Mammary epithelial cell (primary cell): ENCODE measurements at regions of chr1 and their contacts with region 1.

Region 1: DNA sequence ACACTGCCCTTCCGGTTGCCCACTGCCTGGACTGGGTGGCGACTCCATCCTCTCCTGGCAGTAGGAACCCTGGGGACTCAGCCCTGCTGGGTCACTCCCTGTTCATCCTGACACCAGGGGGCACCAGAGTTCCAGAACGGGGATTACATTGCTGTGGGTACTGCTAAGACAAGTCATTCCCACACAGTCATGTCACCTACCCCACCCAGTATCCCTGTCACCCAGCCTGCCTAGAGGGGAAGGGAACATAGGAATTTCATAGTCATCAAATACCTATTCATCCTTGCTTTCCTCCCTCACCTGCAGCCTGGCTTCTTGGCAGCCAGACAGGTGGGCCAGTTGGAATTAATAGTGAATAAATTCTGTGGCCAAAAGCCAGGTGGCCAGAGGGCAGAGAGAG is 9.8 kb upstream of the SFN start:
- DNase-seq: peak; percentile 96
- H3K4me3 ChIP-seq: no peak overlapping the region
- H3K27ac ChIP-seq: peak overlapping the region; percentile 87
- H3K4me1 ChIP-seq: peaks cover 82% of the 10 kb centered on the region
- H3K27me3 ChIP-seq: no peaks in the 10 kb centered on the region
- CTCF ChIP-seq: peak; percentile 94 to 99

Region 2: DNA sequence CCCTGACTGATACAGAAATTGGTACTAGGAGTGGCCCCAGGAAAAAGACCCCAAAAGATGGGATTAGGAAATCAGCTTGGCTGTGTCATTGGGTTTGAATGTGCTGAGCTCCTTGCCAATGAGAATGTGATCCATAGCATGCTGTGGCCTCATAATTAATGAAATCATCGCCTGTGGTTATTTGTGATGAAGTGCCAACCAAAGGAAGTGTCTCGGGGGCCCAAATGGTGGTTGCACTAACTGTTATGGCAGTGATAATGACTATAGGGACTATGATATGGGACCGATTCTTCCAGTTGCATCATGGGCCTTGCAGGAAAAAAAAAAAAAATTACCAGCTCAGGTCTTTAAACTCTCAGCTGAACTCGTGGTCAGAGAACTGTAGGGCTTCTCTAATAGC is 42.1 kb before region 1 on chr1:
- CTCF ChIA-PET with region 1: interaction called, 11 read pairs
- dilution Hi-C with region 1: no loop called
- in situ Hi-C with region 1: no loop called
- intact Hi-C with region 1: loop called (anchors 2 kb)
- DNase-seq: no peak
- H3K4me3 ChIP-seq: no peak overlapping the region
- H3K27ac ChIP-seq: no peak overlapping the region
- H3K4me1 ChIP-seq: no peaks in the 10 kb centered on the region
- H3K27me3 ChIP-seq: no peaks in the 10 kb centered on the region
- CTCF ChIP-seq: no peak

Region 3: GRCh38 chr1:26864610-26865527 is 11.7 kb after region 1 on chr1:
- CTCF ChIA-PET with region 1: no interaction called
- dilution Hi-C with region 1: no loop called
- in situ Hi-C with region 1: no loop called
- intact Hi-C with region 1: loop called (anchors 1 kb)
- DNase-seq: peak; percentile 98
- H3K4me3 ChIP-seq: peak overlapping the region; percentile 53 to 99 (median 82)
- H3K27ac ChIP-seq: peak overlapping the region; percentile 98
- H3K4me1 ChIP-seq: peaks cover 36% of the 10 kb centered on the region
- H3K27me3 ChIP-seq: no peaks in the 10 kb centered on the region
- CTCF ChIP-seq: peak in 1 of 2 donors; percentile 1

Region 4: DNA sequence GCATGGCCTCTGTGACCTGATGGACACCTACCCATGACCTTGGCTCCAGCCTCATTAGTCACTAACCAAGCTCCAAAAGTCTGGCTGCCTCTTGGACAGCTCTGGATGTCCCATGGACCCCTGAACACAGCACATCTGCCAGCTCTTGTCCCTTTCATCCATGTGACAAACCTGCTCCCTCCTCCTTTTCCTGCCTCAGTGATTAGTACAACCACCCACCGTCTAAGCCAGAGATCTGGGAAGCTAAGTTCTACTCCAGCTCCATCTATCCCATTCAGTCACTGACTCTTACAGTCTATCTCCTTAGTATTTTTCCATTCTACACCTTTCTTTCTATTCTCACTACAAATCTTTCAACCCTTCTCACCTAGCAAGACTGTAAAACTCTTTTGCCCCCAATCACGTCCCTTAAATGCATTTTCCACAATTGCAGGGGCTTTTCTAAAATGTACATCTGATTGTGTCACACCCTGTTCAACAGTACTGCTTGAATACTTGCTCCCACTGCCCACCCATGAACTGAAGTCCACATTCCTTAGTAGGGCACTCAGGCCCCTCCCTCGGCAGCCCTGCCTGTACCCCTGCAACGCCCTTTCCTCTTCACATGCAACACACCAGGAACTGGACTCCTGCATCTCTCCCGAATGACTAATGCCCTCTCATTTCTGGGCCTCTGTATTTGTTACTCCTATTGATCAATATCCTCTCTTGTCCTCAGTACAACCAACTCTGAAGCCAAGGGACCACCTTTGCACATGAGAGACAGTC is 29.7 kb after region 1 on chr1:
- CTCF ChIA-PET with region 1: interaction called, 3 read pairs
- dilution Hi-C with region 1: no loop called
- in situ Hi-C with region 1: no loop called
- intact Hi-C with region 1: loop called (anchors 1 kb)
- DNase-seq: no peak
- H3K4me3 ChIP-seq: no peak overlapping the region
- H3K27ac ChIP-seq: no peak overlapping the region
- H3K4me1 ChIP-seq: peaks cover under 1% of the 10 kb centered on the region
- H3K27me3 ChIP-seq: no peaks in the 10 kb centered on the region
- CTCF ChIP-seq: no peak

Region 5: GRCh38 chr1:26921540-26922430 is 68.6 kb after region 1 on chr1 and contains the start of gene NUDC:
- CTCF ChIA-PET with region 1: no interaction called
- dilution Hi-C with region 1: no loop called
- in situ Hi-C with region 1: no loop called
- intact Hi-C with region 1: loop called (anchors 2 kb)
- DNase-seq: peak; percentile 96
- H3K4me3 ChIP-seq: peak within 1 kb of the TSS; percentile 56 to 76 (median 71)
- H3K27ac ChIP-seq: peak within 1 kb of the TSS; percentile 86
- H3K4me1 ChIP-seq: peaks cover 21% of the 10 kb centered on the region
- H3K27me3 ChIP-seq: no peaks in the 10 kb centered on the region
- CTCF ChIP-seq: no peak
- total RNA-seq, gene NUDC: 22.7 to 96.8 TPM

Region 6: GRCh38 chr1:26970810-26971209 is 117.7 kb after region 1 on chr1:
- CTCF ChIA-PET with region 1: interaction called, 19 read pairs
- dilution Hi-C with region 1: no loop called
- in situ Hi-C with region 1: no loop called
- intact Hi-C with region 1: no loop called
- DNase-seq: no peak
- H3K4me3 ChIP-seq: no peak overlapping the region
- H3K27ac ChIP-seq: no peak overlapping the region
- H3K4me1 ChIP-seq: no peaks in the 10 kb centered on the region
- H3K27me3 ChIP-seq: no peaks in the 10 kb centered on the region
- CTCF ChIP-seq: no peak

Region 7: DNA sequence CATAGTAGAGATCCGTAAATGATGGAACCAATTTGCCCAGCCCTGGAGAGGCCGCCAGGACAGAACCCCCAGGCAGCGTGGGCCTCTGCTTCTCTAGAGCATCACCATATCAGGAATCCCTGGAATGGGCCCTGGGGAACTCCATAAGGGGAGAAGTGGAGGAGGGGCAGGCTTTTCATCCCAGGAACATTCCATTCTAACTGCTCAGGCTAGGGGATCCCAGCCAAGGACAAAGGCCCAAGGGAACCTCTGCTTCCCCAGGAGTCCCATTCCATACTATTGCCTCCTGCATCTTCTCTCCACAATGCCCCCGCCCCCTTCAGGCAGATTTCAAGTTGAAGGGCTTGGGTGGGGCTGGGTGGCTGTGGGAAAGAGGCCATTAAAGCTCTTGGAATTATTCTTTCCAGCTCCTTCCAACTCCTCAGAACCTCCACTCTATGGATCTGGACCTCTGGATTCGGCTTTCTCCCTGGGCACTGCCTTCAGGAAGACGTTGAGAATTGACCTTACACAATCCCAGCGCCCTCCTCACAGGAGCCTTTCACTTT is 146.4 kb after region 1 on chr1:
- CTCF ChIA-PET with region 1: no interaction called
- dilution Hi-C with region 1: no loop called
- in situ Hi-C with region 1: no loop called
- intact Hi-C with region 1: loop called (anchors 2 kb)
- DNase-seq: peak; percentile 94
- H3K4me3 ChIP-seq: no peak overlapping the region
- H3K27ac ChIP-seq: peak overlapping the region; percentile 96
- H3K4me1 ChIP-seq: peaks cover 88% of the 10 kb centered on the region
- H3K27me3 ChIP-seq: no peaks in the 10 kb centered on the region
- CTCF ChIP-seq: peak in 1 of 2 donors; percentile 15